AG04449 (cell line): ENCODE measurements at regions of chr5 and their contacts with region 1.

Region 1: DNA sequence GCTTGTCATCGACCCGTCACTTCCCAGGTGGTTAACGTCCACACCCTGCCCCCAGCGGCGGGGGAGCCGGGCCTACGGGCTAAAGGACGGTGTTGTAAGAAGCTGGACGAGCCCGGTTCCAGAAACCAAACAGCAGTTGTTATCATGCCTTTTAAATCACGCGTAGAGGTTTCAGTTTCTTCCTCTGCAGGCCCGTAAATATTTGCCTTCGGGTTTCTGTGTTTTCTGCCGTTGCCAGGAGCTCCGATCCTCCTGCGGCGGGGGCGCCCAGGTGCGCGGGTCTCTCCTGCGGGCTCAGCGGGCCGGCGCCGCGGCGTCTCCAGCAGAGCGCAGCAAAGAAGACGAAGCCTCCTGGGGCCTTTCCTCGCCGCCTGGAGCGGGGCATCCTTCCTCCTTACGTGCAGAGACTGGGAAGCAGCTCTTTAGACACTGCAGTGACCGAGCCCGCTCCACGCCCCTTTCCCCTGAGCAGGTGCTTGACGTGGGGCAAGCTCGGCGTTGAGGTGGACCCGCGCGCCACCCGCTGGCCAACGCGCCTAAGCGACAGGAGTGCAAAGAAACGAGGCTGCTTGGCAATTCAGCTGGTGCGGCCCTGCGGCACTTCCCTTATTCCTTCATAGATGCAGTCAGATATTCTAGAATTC is 21.8 kb upstream of the TTC1 start:
- DNase-seq: no peak
- H3K4me3 ChIP-seq: peak overlapping the region; percentile 57
- CTCF ChIP-seq: peak; percentile 90

Region 2: DNA sequence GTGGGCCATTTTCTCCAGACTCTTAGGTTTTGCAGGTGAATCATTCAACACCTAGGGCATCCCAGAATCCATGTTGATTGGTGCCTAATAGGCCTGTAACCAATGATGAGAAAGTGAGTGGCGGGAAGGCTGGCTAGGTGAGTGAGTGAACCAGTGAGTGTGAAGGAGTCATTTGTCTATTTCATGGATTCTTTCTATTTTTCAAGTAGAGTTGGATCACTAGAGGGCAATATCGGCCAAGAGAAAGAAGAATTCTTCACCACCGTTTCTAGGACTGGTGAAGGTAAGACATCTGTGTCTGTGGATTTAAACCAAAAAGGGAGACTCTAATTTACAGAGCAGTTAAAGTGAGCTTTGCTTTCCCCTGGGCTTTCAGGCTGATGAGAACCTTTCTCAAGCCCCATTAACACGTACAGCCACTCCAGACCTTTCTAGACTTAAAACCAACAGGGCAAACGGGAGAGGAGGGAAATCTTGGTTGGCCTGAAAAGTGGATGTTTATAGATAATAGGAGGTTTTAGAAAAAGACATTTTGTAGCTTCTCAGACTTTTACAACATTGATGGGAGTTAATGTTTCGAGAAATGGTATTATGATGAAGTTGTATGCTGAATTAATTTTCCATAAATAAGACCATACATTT is 542.6 kb before region 1 on chr5:
- CTCF ChIA-PET with region 1: interaction called, 231 read pairs
- POLR2A ChIA-PET with region 1: no interaction called
- DNase-seq: no peak
- H3K4me3 ChIP-seq: no peak overlapping the region
- CTCF ChIP-seq: peak; percentile 28

Region 3: DNA sequence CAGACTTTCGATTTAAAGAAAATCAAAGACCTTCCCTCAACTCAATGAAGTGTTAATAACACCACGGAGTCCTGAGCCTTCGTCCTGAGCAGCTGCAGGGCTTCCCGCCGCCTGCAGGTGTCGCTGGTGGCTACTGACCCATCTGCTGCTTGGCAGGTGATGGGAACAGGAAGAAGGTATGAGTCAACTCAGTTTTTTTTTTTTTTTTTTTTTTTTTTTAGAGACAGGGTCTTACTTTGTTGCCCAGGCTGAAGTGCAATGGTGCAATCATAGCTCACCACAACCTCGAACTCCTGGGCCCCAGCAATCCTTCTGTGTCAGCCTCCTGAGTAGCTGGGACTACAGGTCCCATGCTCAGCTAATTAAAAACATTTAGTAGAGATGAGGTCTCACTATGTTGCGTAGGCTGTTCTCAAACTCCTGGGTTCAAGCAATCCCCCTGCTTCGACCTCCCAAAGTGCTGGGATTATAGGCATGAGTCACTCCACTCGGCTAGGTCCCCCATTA is 471.2 kb before region 1 on chr5:
- CTCF ChIA-PET with region 1: interaction called, 10 read pairs
- POLR2A ChIA-PET with region 1: no interaction called
- DNase-seq: no peak
- H3K4me3 ChIP-seq: no peak overlapping the region
- CTCF ChIP-seq: peak; percentile 74

Region 4: DNA sequence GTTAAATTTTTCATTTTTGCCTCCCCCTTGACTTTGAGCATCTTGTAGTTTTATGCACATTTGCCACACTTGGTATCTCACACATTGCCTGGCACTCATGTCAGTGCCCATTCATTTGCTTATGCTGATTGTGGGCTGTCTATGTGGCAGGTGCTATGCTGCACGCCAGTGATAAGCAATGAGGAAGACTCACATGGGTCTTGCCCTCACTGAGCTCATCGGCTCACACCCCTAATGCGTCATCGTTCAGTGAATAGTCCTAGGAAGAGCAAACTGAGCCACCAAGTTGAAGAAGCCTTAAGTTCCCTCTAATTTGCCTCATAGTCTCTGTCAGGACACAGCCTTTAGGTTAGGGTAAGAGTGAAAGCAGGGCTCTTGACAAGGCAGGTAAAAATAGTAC is 447.5 kb before region 1 on chr5:
- CTCF ChIA-PET with region 1: no interaction called
- POLR2A ChIA-PET with region 1: no interaction called
- DNase-seq: no peak
- H3K4me3 ChIP-seq: no peak overlapping the region
- CTCF ChIP-seq: no peak

Region 5: GRCh38 chr5:159616952-159617351 is 370.2 kb before region 1 on chr5:
- CTCF ChIA-PET with region 1: no interaction called
- POLR2A ChIA-PET with region 1: no interaction called
- DNase-seq: no peak
- H3K4me3 ChIP-seq: no peak overlapping the region
- CTCF ChIP-seq: no peak

Region 6: DNA sequence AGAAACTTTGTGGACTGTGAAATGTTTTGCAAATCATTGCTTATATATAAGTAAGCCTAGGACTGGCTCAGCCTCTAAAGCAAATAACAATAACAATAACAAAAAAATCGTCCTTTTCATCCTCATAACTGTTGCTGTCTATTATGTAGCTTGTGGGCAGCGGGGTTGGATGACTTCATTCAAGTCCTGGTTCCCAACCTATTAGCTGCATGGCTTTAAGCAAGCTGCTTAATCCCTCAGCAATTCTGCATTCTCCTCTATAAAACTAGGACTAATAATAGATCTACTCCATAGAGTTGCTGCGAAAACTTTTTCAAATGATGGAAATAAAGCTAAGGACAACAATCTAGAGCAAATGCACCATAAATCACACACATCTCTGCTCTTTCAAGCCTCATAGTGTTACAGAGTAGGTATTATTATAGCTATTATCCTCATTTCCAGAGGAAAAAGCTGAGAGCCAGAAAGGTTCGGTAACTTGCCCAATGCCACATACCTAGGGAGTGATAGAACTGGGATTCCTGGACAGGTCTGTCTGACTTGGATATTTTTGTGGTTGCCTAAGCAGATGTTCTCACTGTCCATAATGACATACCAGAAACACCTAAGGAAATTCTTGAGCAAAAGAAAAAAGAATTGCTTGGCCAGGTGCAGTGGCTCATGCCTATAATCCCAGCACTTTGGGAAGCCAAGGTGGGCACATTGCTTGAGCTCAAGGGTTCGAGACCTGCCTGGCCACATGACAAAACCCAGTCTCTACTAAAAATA is 169.7 kb before region 1 on chr5:
- CTCF ChIA-PET with region 1: no interaction called
- POLR2A ChIA-PET with region 1: no interaction called
- DNase-seq: peak; percentile 29
- H3K4me3 ChIP-seq: no peak overlapping the region
- CTCF ChIP-seq: no peak

Region 7: GRCh38 chr5:159915904-159916840 is 71.0 kb before region 1 on chr5 and contains the start of gene ADRA1B:
- CTCF ChIA-PET with region 1: interaction called, 44 read pairs
- POLR2A ChIA-PET with region 1: no interaction called
- DNase-seq: no peak
- H3K4me3 ChIP-seq: peak within 1 kb of the TSS; percentile 54
- CTCF ChIP-seq: peak; percentile 89

Region 8: GRCh38 chr5:159975462-159976019 is 11.6 kb before region 1 on chr5:
- CTCF ChIA-PET with region 1: interaction called, 55 read pairs
- POLR2A ChIA-PET with region 1: no interaction called
- DNase-seq: peak; percentile 88
- H3K4me3 ChIP-seq: no peak overlapping the region
- CTCF ChIP-seq: peak; percentile 76

Region 9: GRCh38 chr5:160008877-160009590 is 21.9 kb after region 1 on chr5 and contains the start of gene TTC1:
- CTCF ChIA-PET with region 1: interaction called, 12 read pairs
- POLR2A ChIA-PET with region 1: no interaction called
- DNase-seq: peak; percentile 91
- H3K4me3 ChIP-seq: peak within 1 kb of the TSS; percentile 76
- CTCF ChIP-seq: no peak